ENCODE measurements at regions of chr1 and their contacts with region 1.

Region 1: GRCh38 chr1:185317034-185317885 is at the start of gene IVNS1ABP:
- DNase-seq: peak; percentile 94 to 99 (median 96)
- ATAC-seq: peak; percentile 68
- H3K4me3 ChIP-seq: peak within 1 kb of the TSS; percentile 88
- H3K4me3 Mint-ChIP-seq: peak within 1 kb of the TSS; percentile 95
- H3K27ac ChIP-seq: peak within 1 kb of the TSS; percentile 98 to 100
- H3K27ac Mint-ChIP-seq: peak within 1 kb of the TSS; percentile 98
- H3K4me1 ChIP-seq: peaks cover 17% of the 10 kb centered on the region
- H3K4me1 Mint-ChIP-seq: peaks cover 54% of the 10 kb centered on the region
- H3K27me3 ChIP-seq: no peaks in the 10 kb centered on the region
- H3K27me3 Mint-ChIP-seq: no peaks in the 10 kb centered on the region
- CTCF ChIP-seq: peak; percentile 43
- total RNA-seq, gene IVNS1ABP: 234 to 254 TPM

Region 2: GRCh38 chr1:185044981-185045813 is 272.1 kb before region 1 on chr1 and contains the start of gene RNF2:
- CTCF ChIA-PET with region 1: no interaction called
- POLR2A ChIA-PET with region 1: interaction called, 10 read pairs
- intact Hi-C with region 1: loop called (anchors 5 to 10 kb)
- DNase-seq: peak; percentile 62 to 94 (median 76)
- ATAC-seq: peak; percentile 90
- H3K4me3 ChIP-seq: peak within 1 kb of the TSS; percentile 80
- H3K4me3 Mint-ChIP-seq: peak within 1 kb of the TSS; percentile 94
- H3K27ac ChIP-seq: peak within 1 kb of the TSS; percentile 70 to 72
- H3K27ac Mint-ChIP-seq: peak within 1 kb of the TSS; percentile 77
- H3K4me1 ChIP-seq: peaks cover 13% of the 10 kb centered on the region
- H3K4me1 Mint-ChIP-seq: peaks cover 59% of the 10 kb centered on the region
- H3K27me3 ChIP-seq: no peaks in the 10 kb centered on the region
- H3K27me3 Mint-ChIP-seq: no peaks in the 10 kb centered on the region
- CTCF ChIP-seq: peak; percentile 15
- total RNA-seq, gene RNF2: 7.4 to 9.0 TPM

Region 3: GRCh38 chr1:185244015-185244747 is 73.1 kb before region 1 on chr1:
- CTCF ChIA-PET with region 1: interaction called, 13 read pairs
- POLR2A ChIA-PET with region 1: interaction called, 69 read pairs
- intact Hi-C with region 1: loop called (anchors 5 kb)
- DNase-seq: peak in 8 of 14 experiments; percentile 19 to 59 (median 26)
- ATAC-seq: no peak
- H3K4me3 ChIP-seq: no peak overlapping the region
- H3K4me3 Mint-ChIP-seq: no peak overlapping the region
- H3K27ac ChIP-seq: no peak overlapping the region
- H3K27ac Mint-ChIP-seq: no peak overlapping the region
- H3K4me1 ChIP-seq: no peaks in the 10 kb centered on the region
- H3K4me1 Mint-ChIP-seq: peaks cover 39% of the 10 kb centered on the region
- H3K27me3 ChIP-seq: no peaks in the 10 kb centered on the region
- H3K27me3 Mint-ChIP-seq: no peaks in the 10 kb centered on the region
- CTCF ChIP-seq: no peak

Region 4: DNA sequence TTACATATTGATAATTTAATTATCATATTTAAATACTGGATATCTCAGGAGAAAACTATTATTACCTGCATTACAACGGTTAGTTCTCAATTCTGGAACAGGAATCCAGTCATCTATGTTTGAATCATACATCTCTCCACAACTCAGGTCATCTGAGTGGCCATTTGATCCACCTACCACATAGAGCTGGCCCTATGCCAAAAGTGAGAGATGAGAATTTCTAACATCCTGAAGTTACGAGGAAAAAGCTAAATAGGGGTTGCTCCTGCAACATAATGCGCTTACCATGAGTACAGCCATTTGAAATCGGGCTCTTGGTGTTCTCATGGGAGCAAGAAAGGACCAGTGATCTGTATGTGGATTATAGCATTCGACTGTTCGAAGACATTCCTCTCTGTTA is 17.1 kb before region 1 on chr1:
- CTCF ChIA-PET with region 1: no interaction called
- POLR2A ChIA-PET with region 1: interaction called, 12 read pairs
- intact Hi-C with region 1: no loop called
- DNase-seq: no peak
- ATAC-seq: no peak
- H3K4me3 ChIP-seq: no peak overlapping the region
- H3K4me3 Mint-ChIP-seq: no peak overlapping the region
- H3K27ac ChIP-seq: no peak overlapping the region
- H3K27ac Mint-ChIP-seq: no peak overlapping the region
- H3K4me1 ChIP-seq: no peaks in the 10 kb centered on the region
- H3K4me1 Mint-ChIP-seq: peaks cover 30% of the 10 kb centered on the region
- H3K27me3 ChIP-seq: no peaks in the 10 kb centered on the region
- H3K27me3 Mint-ChIP-seq: no peaks in the 10 kb centered on the region
- CTCF ChIP-seq: no peak

Region 5: DNA sequence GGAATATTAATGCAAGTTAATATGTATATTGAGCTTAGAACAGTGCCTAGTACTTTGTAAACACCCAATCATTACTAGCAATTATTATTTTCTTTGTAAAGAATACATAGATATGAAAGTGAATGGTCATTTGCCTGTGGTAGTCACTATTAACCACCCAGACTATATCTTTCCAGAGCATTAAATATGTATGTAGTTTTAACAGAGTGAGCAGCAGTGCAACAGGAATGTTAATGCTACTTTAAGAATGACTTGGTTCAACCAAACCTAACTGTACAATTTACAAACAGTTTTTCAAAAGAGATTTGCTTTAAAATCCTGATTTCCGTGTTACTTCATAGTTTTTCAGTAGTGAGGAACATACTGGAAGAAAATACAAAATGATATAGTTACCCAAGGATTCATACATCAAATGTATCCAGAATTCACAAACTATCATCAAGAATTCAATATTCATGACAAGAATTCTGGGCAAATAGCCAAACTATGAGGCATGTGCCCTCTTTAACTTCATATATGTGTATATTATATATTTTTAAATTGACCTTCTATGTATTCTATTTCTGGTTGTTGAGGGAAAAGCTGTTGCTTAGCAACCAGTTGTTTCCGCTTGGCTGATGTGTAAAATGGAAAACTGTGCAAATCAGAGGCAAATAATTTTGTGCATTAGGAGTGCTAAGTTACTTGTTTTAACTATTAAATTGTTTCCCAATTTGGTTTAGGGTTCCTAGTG is 34.6 kb after region 1 on chr1:
- CTCF ChIA-PET with region 1: no interaction called
- POLR2A ChIA-PET with region 1: no interaction called
- intact Hi-C with region 1: no loop called
- DNase-seq: no peak
- ATAC-seq: no peak
- H3K4me3 ChIP-seq: no peak overlapping the region
- H3K4me3 Mint-ChIP-seq: no peak overlapping the region
- H3K27ac ChIP-seq: no peak overlapping the region
- H3K27ac Mint-ChIP-seq: no peak overlapping the region
- H3K4me1 ChIP-seq: no peaks in the 10 kb centered on the region
- H3K4me1 Mint-ChIP-seq: peaks cover 13% of the 10 kb centered on the region
- H3K27me3 ChIP-seq: no peaks in the 10 kb centered on the region
- H3K27me3 Mint-ChIP-seq: no peaks in the 10 kb centered on the region
- CTCF ChIP-seq: no peak

Region 6: GRCh38 chr1:185559684-185560331 is 242.5 kb after region 1 on chr1:
- CTCF ChIA-PET with region 1: interaction called, 26 read pairs
- POLR2A ChIA-PET with region 1: interaction called, 7 read pairs
- intact Hi-C with region 1: loop called in 1 of 2 experiments (anchors 5 kb)
- DNase-seq: peak in 10 of 14 experiments; percentile 17 to 84 (median 41)
- ATAC-seq: peak; percentile 69
- H3K4me3 ChIP-seq: no peak overlapping the region
- H3K4me3 Mint-ChIP-seq: peak overlapping the region; percentile 63
- H3K27ac ChIP-seq: peak overlapping the region in 1 of 2 donors; percentile 12
- H3K27ac Mint-ChIP-seq: peak overlapping the region; percentile 63
- H3K4me1 ChIP-seq: peaks cover 33% of the 10 kb centered on the region
- H3K4me1 Mint-ChIP-seq: peaks cover 54% of the 10 kb centered on the region
- H3K27me3 ChIP-seq: no peaks in the 10 kb centered on the region
- H3K27me3 Mint-ChIP-seq: no peaks in the 10 kb centered on the region
- CTCF ChIP-seq: no peak

Region 7: GRCh38 chr1:185646202-185646683 is 329.0 kb after region 1 on chr1:
- CTCF ChIA-PET with region 1: no interaction called
- POLR2A ChIA-PET with region 1: interaction called, 10 read pairs
- intact Hi-C with region 1: no loop called
- DNase-seq: no peak
- ATAC-seq: no peak
- H3K4me3 ChIP-seq: no peak overlapping the region
- H3K4me3 Mint-ChIP-seq: peak overlapping the region; percentile 21
- H3K27ac ChIP-seq: no peak overlapping the region
- H3K27ac Mint-ChIP-seq: peak overlapping the region; percentile 82
- H3K4me1 ChIP-seq: peaks cover 5% of the 10 kb centered on the region
- H3K4me1 Mint-ChIP-seq: peaks cover 45% of the 10 kb centered on the region
- H3K27me3 ChIP-seq: no peaks in the 10 kb centered on the region
- H3K27me3 Mint-ChIP-seq: no peaks in the 10 kb centered on the region
- CTCF ChIP-seq: no peak

Region 8: DNA sequence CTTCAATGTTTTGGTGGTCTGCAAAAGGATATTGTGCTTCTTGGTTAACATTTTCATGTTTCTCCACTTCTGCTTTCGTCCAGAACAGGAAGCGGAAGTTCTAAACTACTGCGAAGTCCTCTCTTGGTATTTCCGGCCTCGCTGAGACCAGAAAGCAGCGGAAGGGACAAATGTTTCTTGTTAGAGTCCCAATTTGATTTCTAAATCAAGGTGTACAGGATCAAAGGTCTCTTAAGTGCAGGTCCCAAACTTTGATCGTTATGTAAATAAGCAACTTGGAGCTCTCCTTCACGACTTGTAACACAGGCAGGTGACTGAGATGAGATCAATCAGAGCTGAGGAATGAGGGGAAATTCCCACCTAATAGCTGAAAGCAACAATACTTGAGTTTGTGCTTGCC is 376.8 kb after region 1 on chr1:
- CTCF ChIA-PET with region 1: interaction called, 9 read pairs
- POLR2A ChIA-PET with region 1: interaction called, 32 read pairs
- intact Hi-C with region 1: no loop called
- DNase-seq: peak in 5 of 14 experiments; percentile 6 to 64 (median 63)
- ATAC-seq: peak; percentile 44
- H3K4me3 ChIP-seq: peak overlapping the region; percentile 46
- H3K4me3 Mint-ChIP-seq: peak overlapping the region; percentile 78
- H3K27ac ChIP-seq: peak overlapping the region; percentile 45 to 66
- H3K27ac Mint-ChIP-seq: peak overlapping the region; percentile 84
- H3K4me1 ChIP-seq: peaks cover 9% of the 10 kb centered on the region
- H3K4me1 Mint-ChIP-seq: peaks cover 23% of the 10 kb centered on the region
- H3K27me3 ChIP-seq: no peaks in the 10 kb centered on the region
- H3K27me3 Mint-ChIP-seq: peaks cover 5% of the 10 kb centered on the region
- CTCF ChIP-seq: no peak